Dendritic cell treated with granulocyte-macrophage colony-stimulating factor and Interleukin-4, amounts not matched to agents 40 ng/mL and 50 ng/mL, for 4 days (primary cell): ENCODE measurements at regions of chr2 and their contacts with region 1.

Region 1: GRCh38 chr2:175167792-175168563 is at the start of gene ATF2:
- H3K4me3 Mint-ChIP-seq: peak within 1 kb of the TSS; percentile 98
- H3K27ac Mint-ChIP-seq: peak within 1 kb of the TSS; percentile 95
- H3K4me1 Mint-ChIP-seq: peaks cover 22% of the 10 kb centered on the region
- H3K27me3 Mint-ChIP-seq: no peaks in the 10 kb centered on the region

Region 2: GRCh38 chr2:174487108-174487819 is 680.7 kb before region 1 on chr2:
- intact Hi-C with region 1: loop called (anchors 5 kb)
- H3K4me3 Mint-ChIP-seq: peak overlapping the region; percentile 91
- H3K27ac Mint-ChIP-seq: peak overlapping the region; percentile 96
- H3K4me1 Mint-ChIP-seq: peaks cover 34% of the 10 kb centered on the region
- H3K27me3 Mint-ChIP-seq: peaks cover 6% of the 10 kb centered on the region

Region 3: GRCh38 chr2:175181104-175181876 is 13.3 kb after region 1 on chr2 and contains the start of gene ATP5MC3:
- intact Hi-C with region 1: loop called (anchors 1 kb)
- H3K4me3 Mint-ChIP-seq: peak within 1 kb of the TSS; percentile 92
- H3K27ac Mint-ChIP-seq: peak within 1 kb of the TSS; percentile 95
- H3K4me1 Mint-ChIP-seq: peaks cover 16% of the 10 kb centered on the region
- H3K27me3 Mint-ChIP-seq: peaks cover 2% of the 10 kb centered on the region